PC-9 (cell line): ENCODE measurements at regions of chr1 and their contacts with region 1.

Region 1: DNA sequence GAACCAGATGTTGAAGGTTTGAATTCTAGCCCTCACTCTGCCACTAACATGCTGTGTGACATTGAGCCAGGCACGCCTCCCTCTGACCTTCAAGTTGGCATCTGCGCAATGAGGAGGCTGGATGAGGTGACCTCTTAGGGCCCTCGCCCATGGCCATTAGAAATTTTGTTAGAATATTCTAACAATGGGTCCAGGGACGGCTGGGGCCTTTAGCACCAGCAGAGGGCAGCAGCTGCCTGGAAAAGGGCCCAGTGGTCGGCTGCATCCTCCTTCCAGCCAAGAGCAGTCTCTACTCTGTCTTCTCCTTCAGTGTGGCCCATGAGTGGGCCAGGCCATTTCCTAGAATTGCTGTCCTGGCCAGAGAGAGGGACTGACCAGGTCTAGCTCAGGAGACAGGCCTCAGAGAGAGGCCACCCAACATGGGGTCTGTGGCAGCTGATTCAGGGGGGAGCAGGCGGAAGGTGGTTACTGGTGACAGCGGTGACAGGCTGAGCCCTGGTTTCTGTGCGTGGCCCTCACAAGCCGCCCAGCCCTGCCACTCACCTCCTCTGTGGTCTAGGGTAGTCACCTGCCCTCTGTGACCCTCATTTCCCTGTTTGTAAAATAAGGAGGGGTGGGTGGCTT is 101.3 kb upstream of the ACTL8 start:
- DNase-seq: peak in 1 of 2 experiments; percentile 43
- H3K4me3 ChIP-seq: no peak overlapping the region
- H3K27ac ChIP-seq: no peak overlapping the region
- H3K4me1 ChIP-seq: no peaks in the 10 kb centered on the region
- H3K27me3 ChIP-seq: no peaks in the 10 kb centered on the region
- CTCF ChIP-seq: peak; percentile 65

Region 2: GRCh38 chr1:17808816-17809215 is 155.0 kb after region 1 on chr1:
- CTCF ChIA-PET with region 1: no interaction called
- POLR2A ChIA-PET with region 1: no interaction called
- intact Hi-C with region 1: no loop called
- DNase-seq: no peak
- H3K4me3 ChIP-seq: no peak overlapping the region
- H3K27ac ChIP-seq: no peak overlapping the region
- H3K4me1 ChIP-seq: no peaks in the 10 kb centered on the region
- H3K27me3 ChIP-seq: 0 out of 2 replicates have a peak, but pooled peaks cover 4% of the 10 kb centered on the region
- CTCF ChIP-seq: no peak

Region 3: GRCh38 chr1:17845583-17845982 is 191.7 kb after region 1 on chr1:
- CTCF ChIA-PET with region 1: interaction called, 17 read pairs
- POLR2A ChIA-PET with region 1: no interaction called
- intact Hi-C with region 1: no loop called
- DNase-seq: no peak
- H3K4me3 ChIP-seq: no peak overlapping the region
- H3K27ac ChIP-seq: no peak overlapping the region
- H3K4me1 ChIP-seq: no peaks in the 10 kb centered on the region
- H3K27me3 ChIP-seq: peaks cover 9% of the 10 kb centered on the region; the same call in 1 of the 2 replicates
- CTCF ChIP-seq: no peak